Heart right ventricle (tissue), 16 donors: ENCODE measurements at regions of chr7 and their contacts with region 1.

Region 1: DNA sequence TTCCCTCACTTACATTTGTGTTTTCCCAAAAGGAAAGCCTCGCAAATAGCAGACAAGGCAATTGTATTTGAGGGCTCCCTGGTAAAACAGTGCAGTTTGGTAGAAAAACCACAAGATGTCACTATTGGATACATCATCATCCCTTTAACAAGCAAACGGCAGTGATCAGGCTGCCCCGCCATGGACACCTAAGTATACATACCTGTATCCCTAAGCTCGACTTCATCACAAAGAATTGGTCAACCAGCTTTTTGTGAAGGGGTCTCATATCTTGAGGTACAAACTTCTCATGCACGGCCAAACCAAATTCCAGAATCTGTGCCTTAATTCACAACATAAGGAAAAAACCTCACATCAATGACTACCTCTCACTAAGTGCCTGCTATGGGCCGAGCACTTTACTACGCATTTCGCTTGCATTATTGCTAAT is 179.5 kb upstream of the IMMP2L start:
- DNase-seq: peak in 1 of 2 donors; percentile 24
- ATAC-seq: peak in 7 of 8 donors; percentile 34 to 76 (median 64)
- H3K4me3 ChIP-seq: no peak overlapping the region
- H3K27ac ChIP-seq: no peak overlapping the region
- H3K4me1 ChIP-seq: peaks cover 0 to 3% (median 0%) of the 10 kb centered on the region in 9 donors
- H3K27me3 ChIP-seq: no peaks in the 10 kb centered on the region
- CTCF ChIP-seq: peak; percentile 31 to 76 (median 63)

Region 2: DNA sequence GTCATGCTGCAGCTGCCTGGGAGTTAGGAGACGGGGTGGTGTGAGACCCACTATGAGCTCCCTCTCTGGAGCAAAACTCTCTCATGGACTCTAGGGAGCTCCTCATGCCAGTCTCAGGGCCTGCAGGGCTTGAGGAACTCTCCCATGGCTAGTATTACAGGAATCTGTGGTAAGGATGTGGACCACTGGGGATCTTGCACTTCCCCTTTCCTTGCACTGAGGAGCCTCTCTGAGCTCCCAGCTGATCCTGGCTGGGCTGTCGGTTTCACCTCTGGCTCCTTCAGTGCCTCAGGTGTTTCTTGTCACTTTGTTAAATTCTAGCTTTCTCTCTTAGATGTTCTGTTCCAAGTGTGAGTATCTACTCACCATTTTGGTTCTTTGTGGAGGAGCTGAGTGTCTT is 107.9 kb before region 1 on chr7:
- intact Hi-C with region 1: no loop called
- DNase-seq: no peak
- ATAC-seq: no peak
- H3K4me3 ChIP-seq: no peak overlapping the region
- H3K27ac ChIP-seq: no peak overlapping the region
- H3K4me1 ChIP-seq: no peaks in the 10 kb centered on the region
- H3K27me3 ChIP-seq: no peaks in the 10 kb centered on the region
- CTCF ChIP-seq: no peak

Region 3: DNA sequence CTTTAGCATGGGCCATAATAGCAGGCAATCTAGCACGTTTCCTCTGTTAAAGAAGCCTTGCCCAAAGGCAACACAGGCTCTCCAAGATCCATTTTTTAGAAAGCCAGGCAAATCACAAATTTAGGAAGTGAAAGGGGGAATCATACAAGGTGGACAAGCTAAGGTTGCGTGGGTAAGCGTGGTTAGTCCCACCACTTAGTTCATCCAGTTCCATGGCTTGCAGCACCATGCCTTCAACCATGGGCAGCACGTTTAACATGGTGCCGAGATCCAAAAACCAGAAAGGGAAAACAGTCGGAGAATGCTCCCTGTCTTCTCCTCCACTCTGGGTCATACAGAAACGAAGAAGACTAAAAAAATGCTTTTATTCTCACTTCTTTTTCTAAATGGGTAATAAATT is 54.8 kb after region 1 on chr7:
- intact Hi-C with region 1: no loop called
- DNase-seq: no peak
- ATAC-seq: no peak
- H3K4me3 ChIP-seq: no peak overlapping the region
- H3K27ac ChIP-seq: no peak overlapping the region
- H3K4me1 ChIP-seq: no peaks in the 10 kb centered on the region
- H3K27me3 ChIP-seq: no peaks in the 10 kb centered on the region
- CTCF ChIP-seq: no peak

Region 4: GRCh38 chr7:112752576-112752975 is 1010.8 kb after region 1 on chr7:
- intact Hi-C with region 1: no loop called
- DNase-seq: no peak
- ATAC-seq: no peak
- H3K4me3 ChIP-seq: no peak overlapping the region
- H3K27ac ChIP-seq: no peak overlapping the region
- H3K4me1 ChIP-seq: no peaks in the 10 kb centered on the region
- H3K27me3 ChIP-seq: no peaks in the 10 kb centered on the region
- CTCF ChIP-seq: no peak

Region 5: DNA sequence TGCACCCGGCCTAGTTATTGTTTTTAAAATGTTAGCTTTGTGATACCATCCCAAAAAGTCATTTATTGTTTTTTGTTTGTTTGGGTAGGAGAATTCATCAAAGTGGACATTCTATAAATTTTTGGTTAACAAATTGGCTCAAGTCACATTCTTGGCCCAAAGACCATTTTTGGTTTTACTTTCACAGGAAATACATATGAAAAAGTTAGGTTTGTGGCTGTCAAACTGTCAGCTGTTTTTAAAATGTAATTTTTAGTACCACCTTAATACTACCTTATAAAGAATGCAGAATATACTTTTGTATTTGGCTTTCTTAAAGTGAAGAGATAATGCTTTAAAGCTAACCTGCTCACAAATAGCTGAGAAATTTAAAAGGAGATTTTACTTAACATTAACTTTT is 1023.3 kb after region 1 on chr7:
- intact Hi-C with region 1: loop called in 1 of 10 experiments (anchors 10 kb)
- DNase-seq: no peak
- ATAC-seq: no peak
- H3K4me3 ChIP-seq: no peak overlapping the region
- H3K27ac ChIP-seq: no peak overlapping the region
- H3K4me1 ChIP-seq: peaks cover 0 to 16% (median 0%) of the 10 kb centered on the region in 9 donors
- H3K27me3 ChIP-seq: no peaks in the 10 kb centered on the region
- CTCF ChIP-seq: no peak

Region 6: GRCh38 chr7:113414401-113415035 is 1672.7 kb after region 1 on chr7:
- intact Hi-C with region 1: loop called in 1 of 10 experiments (anchors 10 kb)
- DNase-seq: no peak
- ATAC-seq: no peak
- H3K4me3 ChIP-seq: no peak overlapping the region
- H3K27ac ChIP-seq: no peak overlapping the region
- H3K4me1 ChIP-seq: no peaks in the 10 kb centered on the region
- H3K27me3 ChIP-seq: no peaks in the 10 kb centered on the region
- CTCF ChIP-seq: no peak